ENCODE measurements at regions of chr4 and their contacts with region 1.

Region 1: GRCh38 chr4:98113012-98113411 is 30.3 kb downstream of the STPG2 start:
- DNase-seq: no peak
- H3K4me3 ChIP-seq: no peak overlapping the region
- H3K27ac ChIP-seq: no peak overlapping the region
- H3K27me3 ChIP-seq: no peaks in the 10 kb centered on the region
- CTCF ChIP-seq: peak; percentile 39

Region 2: DNA sequence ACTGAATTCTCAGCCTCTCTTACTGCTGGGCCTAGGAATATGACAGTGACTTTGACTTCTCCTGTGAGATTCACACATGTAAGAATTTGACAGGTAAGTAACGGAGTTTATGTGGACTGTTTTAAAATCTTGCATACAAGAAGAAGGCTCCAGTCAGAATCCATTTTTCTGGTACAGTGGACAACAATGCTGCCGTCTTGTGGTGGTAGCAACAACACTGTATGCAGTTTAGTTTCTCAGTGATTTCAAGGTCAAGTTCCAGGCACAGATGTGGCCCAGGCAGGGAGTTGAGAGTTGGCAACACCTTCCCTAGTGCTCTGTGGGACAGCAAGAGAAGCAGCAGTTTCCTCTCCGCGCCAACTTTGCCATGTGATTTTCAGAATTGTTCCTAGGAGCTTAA is 86.2 kb after region 1 on chr4:
- CTCF ChIA-PET with region 1: interaction called, 12 read pairs
- POLR2A ChIA-PET with region 1: no interaction called
- DNase-seq: no peak
- H3K4me3 ChIP-seq: no peak overlapping the region
- H3K27ac ChIP-seq: no peak overlapping the region
- H3K27me3 ChIP-seq: no peaks in the 10 kb centered on the region
- CTCF ChIP-seq: no peak

Region 3: DNA sequence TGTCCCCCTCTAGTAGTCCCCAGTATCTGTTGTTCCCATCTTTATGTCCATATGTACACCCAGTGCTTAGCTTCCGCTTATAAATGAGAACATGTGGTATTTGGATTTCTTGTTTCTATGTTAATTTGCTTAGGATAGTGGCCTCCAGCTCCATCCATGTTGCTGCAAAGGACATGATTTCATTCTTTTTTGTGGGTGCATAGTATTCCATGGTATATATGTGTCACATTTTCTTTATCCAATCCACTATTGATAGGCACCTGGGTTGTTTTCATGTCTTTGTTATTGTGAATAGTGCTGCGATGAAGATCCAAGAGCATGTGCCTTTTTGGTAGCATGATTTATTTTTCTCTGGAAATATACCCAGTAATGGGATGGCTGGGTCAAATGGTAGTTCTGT is 154.5 kb after region 1 on chr4:
- CTCF ChIA-PET with region 1: interaction called, 11 read pairs
- POLR2A ChIA-PET with region 1: no interaction called
- DNase-seq: no peak
- H3K4me3 ChIP-seq: no peak overlapping the region
- H3K27ac ChIP-seq: no peak overlapping the region
- H3K27me3 ChIP-seq: no peaks in the 10 kb centered on the region
- CTCF ChIP-seq: no peak

Measured in AG04450 (cell line).